ENCODE measurements at regions of chr1 and their contacts with region 1.

Region 1: GRCh38 chr1:35451125-35451528 is 106.1 kb downstream of the KIAA0319L start:
- DNase-seq: peak; percentile 81 to 89
- ATAC-seq: peak; percentile 87 to 96 (median 93)
- H3K4me3 ChIP-seq: no peak overlapping the region
- H3K27ac ChIP-seq: no peak overlapping the region
- H3K4me1 ChIP-seq: peaks cover 9% of the 10 kb centered on the region
- H3K27me3 ChIP-seq: no peaks in the 10 kb centered on the region
- CTCF ChIP-seq: peak; percentile 77

Region 2: DNA sequence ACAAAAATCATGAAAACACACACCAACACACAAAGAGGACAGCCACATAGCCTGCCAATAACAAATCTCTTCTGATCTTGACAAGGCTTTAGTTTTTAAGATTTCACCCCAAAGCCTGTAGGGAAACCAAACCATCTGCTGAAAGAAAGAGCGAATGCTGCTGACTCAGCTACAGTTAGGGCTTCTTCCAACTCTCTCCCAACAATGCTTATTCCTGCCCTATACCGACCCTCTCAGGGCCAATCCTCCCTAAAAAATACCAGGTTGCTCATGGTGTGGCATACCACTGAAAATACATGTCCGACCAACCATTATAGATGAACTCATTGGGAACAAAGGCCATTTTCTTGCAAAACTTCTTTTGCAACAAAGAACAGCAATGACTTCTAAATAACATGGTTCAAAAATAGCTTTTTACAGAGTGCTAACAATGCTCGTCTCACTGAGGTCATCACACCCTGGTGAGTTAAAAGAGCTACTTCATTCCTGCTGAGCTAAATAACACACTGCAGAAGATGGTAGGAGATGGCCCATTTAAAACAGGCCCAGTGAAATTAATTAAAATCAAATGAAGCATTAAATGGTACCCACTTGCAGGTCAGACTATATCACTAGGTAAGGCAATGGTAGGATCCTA is 20.0 kb after region 1 on chr1:
- intact Hi-C with region 1: no loop called
- DNase-seq: no peak
- ATAC-seq: no peak
- H3K4me3 ChIP-seq: no peak overlapping the region
- H3K27ac ChIP-seq: no peak overlapping the region
- H3K4me1 ChIP-seq: no peaks in the 10 kb centered on the region
- H3K27me3 ChIP-seq: no peaks in the 10 kb centered on the region
- CTCF ChIP-seq: no peak

Region 3: GRCh38 chr1:35544978-35545377 is 93.9 kb after region 1 on chr1:
- intact Hi-C with region 1: loop called (anchors 1 to 2 kb)
- DNase-seq: peak; percentile 26 to 70
- ATAC-seq: peak; percentile 87 to 96 (median 90)
- H3K4me3 ChIP-seq: no peak overlapping the region
- H3K27ac ChIP-seq: no peak overlapping the region
- H3K4me1 ChIP-seq: peaks cover 31% of the 10 kb centered on the region
- H3K27me3 ChIP-seq: no peaks in the 10 kb centered on the region
- CTCF ChIP-seq: peak; percentile 32

Region 4: GRCh38 chr1:35726450-35727433 is 275.6 kb after region 1 on chr1:
- intact Hi-C with region 1: loop called (anchors 5 to 10 kb)
- DNase-seq: peak; percentile 34 to 66
- ATAC-seq: peak; percentile 86 to 96 (median 88)
- H3K4me3 ChIP-seq: no peak overlapping the region
- H3K27ac ChIP-seq: no peak overlapping the region
- H3K4me1 ChIP-seq: no peaks in the 10 kb centered on the region
- H3K27me3 ChIP-seq: no peaks in the 10 kb centered on the region
- CTCF ChIP-seq: peak; percentile 81

Region 5: DNA sequence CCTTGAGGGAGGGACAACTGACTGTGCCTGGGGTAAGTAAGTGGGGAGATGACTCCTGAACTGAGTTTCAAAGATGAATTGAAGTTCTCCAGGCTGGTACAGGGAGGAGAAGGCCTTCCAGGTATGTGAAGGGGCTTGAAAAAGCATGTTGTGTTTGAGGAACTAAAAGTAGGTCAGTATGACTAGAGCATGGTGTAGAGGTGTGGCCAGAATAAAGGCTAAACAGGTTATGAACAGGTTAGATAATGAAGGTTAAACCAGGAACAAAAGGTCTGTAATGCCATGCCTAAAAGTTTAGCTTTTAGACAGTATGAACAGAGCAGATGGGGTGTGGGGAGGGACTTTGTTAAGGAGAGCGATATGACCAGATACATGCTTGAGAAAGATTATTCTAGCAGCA is 326.0 kb after region 1 on chr1:
- intact Hi-C with region 1: loop called in 1 of 2 experiments (anchors 1 kb)
- DNase-seq: no peak
- ATAC-seq: no peak
- H3K4me3 ChIP-seq: no peak overlapping the region
- H3K27ac ChIP-seq: no peak overlapping the region
- H3K4me1 ChIP-seq: no peaks in the 10 kb centered on the region
- H3K27me3 ChIP-seq: no peaks in the 10 kb centered on the region
- CTCF ChIP-seq: no peak

Measured in psoas muscle (tissue), 8 donors.